ENCODE measurements at regions of chr20 and their contacts with region 1.

Region 1: GRCh38 chr20:63537525-63538203 is 488 bp upstream of the PTK6 start:
- DNase-seq: peak; percentile 93

Region 2: GRCh38 chr20:63612276-63612928 is 74.7 kb after region 1 on chr20:
- intact Hi-C with region 1: loop called (anchors 5 kb)
- DNase-seq: no peak

Region 3: GRCh38 chr20:63864847-63865640 is 327.4 kb after region 1 on chr20 and contains the start of gene TPD52L2:
- intact Hi-C with region 1: loop called (anchors 10 kb)
- DNase-seq: peak; percentile 100
- total RNA-seq, gene TPD52L2: 72.0 TPM

Region 4: GRCh38 chr20:63973636-63974402 is 436.2 kb after region 1 on chr20:
- intact Hi-C with region 1: loop called (anchors 2 kb)
- DNase-seq: peak; percentile 93

Region 5: GRCh38 chr20:64119681-64120341 is 582.1 kb after region 1 on chr20:
- intact Hi-C with region 1: loop called (anchors 5 kb)
- DNase-seq: peak; percentile 71

Measured in cardiac septum (tissue), 1 donor.